Testis (tissue), 5 donors: ENCODE measurements at regions of chr15 and their contacts with region 1.

Region 1: DNA sequence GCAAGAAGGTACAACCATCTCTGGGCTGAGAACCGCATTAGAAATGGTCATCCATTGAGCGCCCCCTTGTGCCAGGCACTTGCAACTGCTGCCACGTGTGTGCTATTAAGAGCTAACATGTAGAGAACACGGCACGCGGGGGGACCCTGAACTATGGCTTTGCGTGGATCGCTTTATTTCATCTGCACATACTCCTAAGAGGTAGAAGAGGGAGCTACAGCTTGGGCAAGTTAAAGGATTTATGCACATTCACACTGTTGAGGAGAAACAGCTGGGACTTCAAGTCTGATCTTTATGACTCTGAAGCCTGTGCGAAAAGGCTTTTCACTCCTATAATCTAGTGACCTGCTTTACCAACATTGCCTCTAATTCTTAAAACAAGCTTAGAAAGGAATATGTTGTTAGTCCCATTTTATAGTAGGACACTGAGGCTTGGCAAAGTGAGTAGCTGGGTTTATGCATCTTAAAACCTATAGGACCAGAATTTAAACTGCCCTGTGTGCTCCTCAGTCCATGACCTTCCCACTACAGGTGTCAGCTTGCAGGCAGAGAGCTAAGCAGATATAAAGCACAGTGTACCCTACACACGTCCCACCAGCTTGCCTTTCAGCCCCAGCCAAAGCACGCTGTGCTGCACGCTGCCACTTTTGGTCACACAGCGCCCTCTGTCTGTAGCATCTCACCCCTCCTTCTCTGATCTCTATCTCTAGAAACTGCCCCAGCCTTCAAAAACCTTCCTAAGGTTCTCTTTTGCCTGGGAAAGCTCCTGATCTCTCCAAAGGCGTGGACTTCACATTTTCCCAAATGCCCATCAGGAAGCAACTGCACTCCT is 57.8 kb downstream of the STARD5 start:
- DNase-seq: peak; percentile 90
- H3K4me3 ChIP-seq: peak overlapping the region in 1 of 2 donors; percentile 5
- H3K27ac ChIP-seq: no peak overlapping the region
- H3K4me1 ChIP-seq: peaks cover 11% of the 10 kb centered on the region
- H3K27me3 ChIP-seq: no peaks in the 10 kb centered on the region
- CTCF ChIP-seq: peak; percentile 82 to 94 (median 89)
- POLR2A ChIP-seq: no peak

Region 2: GRCh38 chr15:81106560-81106959 is 159.6 kb before region 1 on chr15:
- intact Hi-C with region 1: loop called (anchors 5 kb)
- DNase-seq: peak; percentile 67
- H3K4me3 ChIP-seq: no peak overlapping the region
- H3K27ac ChIP-seq: no peak overlapping the region
- H3K4me1 ChIP-seq: no peaks in the 10 kb centered on the region
- H3K27me3 ChIP-seq: no peaks in the 10 kb centered on the region
- CTCF ChIP-seq: peak; percentile 51 to 80 (median 64)
- POLR2A ChIP-seq: no peak

Region 3: DNA sequence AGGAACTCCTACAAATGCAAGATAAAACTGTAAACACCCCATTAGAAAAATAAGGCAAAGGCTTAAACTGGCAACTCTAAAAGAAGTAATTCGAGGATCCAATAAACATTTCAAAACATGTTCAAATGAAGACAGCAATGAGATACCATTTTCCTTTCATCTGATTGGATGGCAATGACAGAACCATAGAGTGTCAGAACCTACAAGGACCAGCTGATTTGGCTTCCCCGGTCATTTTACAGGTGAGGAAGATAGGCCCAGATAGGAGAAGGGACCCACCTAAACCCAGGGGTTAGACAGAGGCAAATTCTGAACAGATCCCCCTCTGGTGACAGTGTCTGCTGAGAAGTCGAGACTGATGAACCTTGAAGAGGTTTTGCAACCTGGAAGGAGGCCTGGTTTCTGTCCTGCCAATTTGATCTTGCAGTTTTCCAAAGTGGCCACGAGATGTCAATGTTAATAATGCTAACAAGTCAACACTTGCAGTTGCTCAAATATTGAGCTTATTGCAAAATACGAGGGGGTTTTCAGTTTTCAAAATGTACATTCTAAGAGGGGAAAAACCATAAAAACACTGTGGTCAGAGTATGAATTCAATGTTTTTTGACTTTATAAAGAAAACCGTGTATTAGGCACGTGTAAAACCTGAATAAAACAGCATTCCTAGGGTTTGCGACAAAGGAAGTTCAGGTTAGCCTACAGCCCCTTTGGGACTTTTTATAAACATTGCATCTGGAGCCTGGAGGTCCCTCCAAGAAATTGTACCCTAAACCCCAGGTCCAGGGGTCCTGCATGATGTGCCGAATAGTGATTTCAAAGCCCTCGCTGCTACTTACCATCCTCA is 110.6 kb before region 1 on chr15:
- intact Hi-C with region 1: loop called (anchors 10 kb)
- DNase-seq: peak; percentile 62
- H3K4me3 ChIP-seq: no peak overlapping the region
- H3K27ac ChIP-seq: no peak overlapping the region
- H3K4me1 ChIP-seq: peaks cover 5% of the 10 kb centered on the region
- H3K27me3 ChIP-seq: no peaks in the 10 kb centered on the region
- CTCF ChIP-seq: peak; percentile 44 to 57 (median 55)
- POLR2A ChIP-seq: no peak